SK-N-SH (cell line): ENCODE measurements at regions of chr1 and their contacts with region 1.

Region 1: DNA sequence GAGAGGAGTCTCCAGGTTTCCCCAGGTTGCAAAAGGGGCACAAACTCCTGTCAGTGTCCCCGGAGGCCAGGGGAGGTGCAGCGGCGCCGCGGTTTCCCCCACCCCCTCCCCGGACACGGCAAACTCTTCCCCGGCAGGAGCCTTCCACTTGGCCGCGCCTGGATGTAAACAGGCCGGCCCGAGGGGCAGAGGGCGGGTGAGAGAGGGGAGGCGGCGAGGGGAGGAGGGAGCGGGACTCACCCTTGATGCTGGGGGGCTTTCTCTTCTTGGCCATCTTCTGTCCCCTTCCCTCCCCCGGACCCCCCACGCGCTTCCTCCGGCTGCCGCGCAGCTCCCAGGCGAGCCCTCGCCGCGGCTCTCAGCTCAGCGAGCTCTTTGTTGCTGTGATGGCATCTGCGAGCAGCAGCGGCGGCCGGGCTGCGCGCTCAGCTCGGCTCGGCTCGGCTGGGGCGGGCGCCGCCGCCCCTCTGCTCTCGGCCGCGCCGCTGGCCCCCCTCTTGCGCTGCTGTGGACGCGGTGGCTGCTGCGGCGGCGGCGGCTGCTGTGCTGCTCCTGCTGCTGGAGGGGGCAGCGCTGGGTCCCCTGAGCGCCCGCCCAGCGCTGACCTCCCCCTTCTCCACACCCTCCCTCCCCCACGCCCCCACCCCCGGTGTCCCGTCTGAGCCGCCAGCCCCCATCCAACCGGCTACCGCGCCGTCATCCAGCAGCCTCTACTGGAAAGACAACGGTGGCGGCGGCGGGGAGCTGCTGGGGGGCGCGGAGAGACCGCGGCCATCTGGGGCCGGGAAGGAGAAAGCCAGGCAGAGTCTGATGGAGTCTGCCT is 4.9 kb upstream of the SLC44A5 start:
- DNase-seq: peak; percentile 88
- H3K4me3 ChIP-seq: peak overlapping the region; percentile 73 to 87
- H3K27ac ChIP-seq: peak overlapping the region in 1 of 2 experiments; percentile 69; a peak in 1 of 4 replicates
- H3K4me1 ChIP-seq: peaks cover 0 to 13% of the 10 kb centered on the region in 2 experiments; a peak in 2 of 4 replicates
- H3K27me3 ChIP-seq: no peaks in the 10 kb centered on the region
- CTCF ChIP-seq: no peak
- EP300 ChIP-seq: no peak
- RAD21 ChIP-seq: no peak

Region 2: GRCh38 chr1:75423616-75424015 is 192.2 kb before region 1 on chr1:
- CTCF ChIA-PET with region 1: interaction called, 19 read pairs
- POLR2A ChIA-PET with region 1: interaction called, 3 read pairs
- DNase-seq: peak; percentile 70
- H3K4me3 ChIP-seq: no peak overlapping the region
- H3K27ac ChIP-seq: peak overlapping the region in 1 of 2 experiments; percentile 83; a peak in 2 of 4 replicates
- H3K4me1 ChIP-seq: peaks cover 0 to 14% of the 10 kb centered on the region in 2 experiments; a peak in 2 of 4 replicates
- H3K27me3 ChIP-seq: no peaks in the 10 kb centered on the region
- CTCF ChIP-seq: peak; percentile 19
- EP300 ChIP-seq: peak in 1 of 2 experiments; percentile 94; a peak in 2 of 4 replicates
- RAD21 ChIP-seq: peak; percentile 74

Region 3: GRCh38 chr1:75575837-75576236 is 40.0 kb before region 1 on chr1:
- CTCF ChIA-PET with region 1: no interaction called
- POLR2A ChIA-PET with region 1: no interaction called
- DNase-seq: no peak
- H3K4me3 ChIP-seq: no peak overlapping the region
- H3K27ac ChIP-seq: peak overlapping the region in 1 of 2 experiments; percentile 43; a peak in 1 of 4 replicates
- H3K4me1 ChIP-seq: peaks cover 0 to 2% of the 10 kb centered on the region in 2 experiments; a peak in 2 of 4 replicates
- H3K27me3 ChIP-seq: no peaks in the 10 kb centered on the region
- CTCF ChIP-seq: no peak
- EP300 ChIP-seq: 0 out of 4 replicates have a peak, but pooled peaks have one; percentile 10 to 13
- RAD21 ChIP-seq: no peak

Region 4: GRCh38 chr1:75600781-75601180 is 15.0 kb before region 1 on chr1:
- CTCF ChIA-PET with region 1: interaction called, 17 read pairs
- POLR2A ChIA-PET with region 1: no interaction called
- DNase-seq: no peak
- H3K4me3 ChIP-seq: no peak overlapping the region
- H3K27ac ChIP-seq: no peak overlapping the region
- H3K4me1 ChIP-seq: no peaks in the 10 kb centered on the region
- H3K27me3 ChIP-seq: no peaks in the 10 kb centered on the region
- CTCF ChIP-seq: no peak
- EP300 ChIP-seq: no peak
- RAD21 ChIP-seq: no peak

Region 5: DNA sequence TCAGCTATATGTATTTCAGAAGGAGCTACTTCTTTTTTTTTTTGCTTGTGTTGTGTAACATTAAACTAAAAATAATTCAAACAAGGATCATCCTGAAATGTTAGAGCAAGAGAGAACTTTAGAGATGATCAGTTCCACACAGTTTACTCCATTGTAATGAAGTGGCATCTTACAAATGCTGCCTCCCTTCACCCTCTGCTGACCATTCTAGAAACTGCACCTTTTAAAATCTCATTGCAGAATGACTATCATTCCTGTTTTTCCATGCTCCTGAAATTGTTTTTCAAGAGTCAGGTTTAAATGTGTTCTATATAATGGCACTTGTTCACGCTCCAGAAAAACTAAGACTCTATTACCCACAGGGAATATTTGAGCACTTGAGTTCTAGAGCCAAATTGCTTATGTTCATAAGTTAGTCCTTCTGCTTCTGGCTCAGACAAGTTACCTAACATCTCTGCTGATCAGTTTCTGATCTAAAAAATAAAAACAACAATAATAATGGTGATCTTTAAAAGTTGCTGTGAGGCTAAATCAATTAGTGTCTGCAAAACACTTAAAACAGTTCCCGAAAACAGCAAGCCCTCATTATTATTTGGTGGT is 16.6 kb after region 1 on chr1:
- CTCF ChIA-PET with region 1: interaction called, 55 read pairs
- POLR2A ChIA-PET with region 1: no interaction called
- DNase-seq: peak; percentile 34
- H3K4me3 ChIP-seq: no peak overlapping the region
- H3K27ac ChIP-seq: no peak overlapping the region
- H3K4me1 ChIP-seq: no peaks in the 10 kb centered on the region
- H3K27me3 ChIP-seq: no peaks in the 10 kb centered on the region
- CTCF ChIP-seq: peak; percentile 86
- EP300 ChIP-seq: no peak
- RAD21 ChIP-seq: peak; percentile 89